CD8-positive, alpha-beta memory T cell (primary cell): ENCODE measurements at regions of chr1 and their contacts with region 1.

Region 1: GRCh38 chr1:212035123-212035834 is at the starts of genes DTL and INTS7:
- DNase-seq: peak; percentile 96 to 99 (median 98)
- H3K4me3 ChIP-seq: peak within 1 kb of the TSS; percentile 96
- H3K4me3 Mint-ChIP-seq: peak within 1 kb of the TSS; percentile 90 to 100 (median 99)
- H3K27ac ChIP-seq: peak within 1 kb of the TSS; percentile 70
- H3K27ac Mint-ChIP-seq: peak within 1 kb of the TSS; percentile 84 to 99 (median 95)
- H3K4me1 ChIP-seq: peaks cover 26% of the 10 kb centered on the region
- H3K4me1 Mint-ChIP-seq: peaks cover 40 to 76% (median 70%) of the 10 kb centered on the region in 3 donors
- H3K27me3 ChIP-seq: no peaks in the 10 kb centered on the region
- H3K27me3 Mint-ChIP-seq: peaks cover 0 to 5% of the 10 kb centered on the region in 2 donors
- total RNA-seq, gene DTL: 85.0 to 86.9 TPM
- total RNA-seq, gene INTS7: 35.2 to 36.0 TPM

Region 2: GRCh38 chr1:211680752-211681327 is 354.4 kb before region 1 on chr1:
- CTCF ChIA-PET with region 1: interaction called, 39 read pairs
- POLR2A ChIA-PET with region 1: interaction called, 5 read pairs
- DNase-seq: peak; percentile 64 to 86 (median 77)
- H3K4me3 ChIP-seq: no peak overlapping the region
- H3K4me3 Mint-ChIP-seq: peak overlapping the region in 6 of 7 donors; percentile 15 to 50 (median 37)
- H3K27ac ChIP-seq: no peak overlapping the region
- H3K27ac Mint-ChIP-seq: peak overlapping the region; percentile 90 to 98 (median 94)
- H3K4me1 ChIP-seq: peaks cover 14% of the 10 kb centered on the region
- H3K4me1 Mint-ChIP-seq: peaks cover 24 to 30% (median 25%) of the 10 kb centered on the region in 3 donors
- H3K27me3 ChIP-seq: no peaks in the 10 kb centered on the region
- H3K27me3 Mint-ChIP-seq: no peaks in the 10 kb centered on the region

Region 3: DNA sequence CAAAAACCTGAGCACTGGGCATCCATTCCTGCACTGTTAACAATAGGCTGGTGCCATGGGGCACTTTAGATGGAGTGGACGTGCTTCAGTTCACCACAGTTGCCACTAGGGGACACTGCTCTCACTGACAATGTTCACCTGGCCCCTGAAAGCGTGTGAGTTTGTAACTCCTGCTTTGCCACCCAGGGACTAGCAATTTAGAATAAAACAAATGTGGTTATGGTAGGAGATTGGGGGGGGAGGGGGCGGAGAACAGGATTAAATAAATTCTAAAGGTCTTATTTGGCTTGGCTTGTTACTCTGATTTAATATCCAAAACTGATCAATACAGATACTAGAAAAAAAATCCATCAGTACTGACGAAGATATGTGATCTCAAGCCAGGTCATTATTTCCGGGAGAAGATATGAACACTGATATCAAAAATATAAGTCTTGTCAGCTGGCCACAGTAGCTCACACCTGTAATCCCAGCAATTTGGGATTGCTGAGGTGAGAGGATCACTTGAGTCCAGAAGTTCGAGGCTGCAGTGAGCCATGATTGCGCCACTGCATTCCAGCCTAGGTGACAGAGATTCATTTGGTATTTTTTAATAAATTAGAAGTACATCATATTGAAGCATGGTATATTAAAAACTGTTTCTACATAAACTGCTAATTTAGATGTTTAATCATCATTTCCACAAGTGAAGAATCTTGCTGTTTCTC is 23.1 kb before region 1 on chr1:
- CTCF ChIA-PET with region 1: interaction called, 13 read pairs
- POLR2A ChIA-PET with region 1: interaction called, 4 read pairs
- DNase-seq: peak; percentile 32 to 72 (median 43)
- H3K4me3 ChIP-seq: no peak overlapping the region
- H3K4me3 Mint-ChIP-seq: no peak overlapping the region
- H3K27ac ChIP-seq: no peak overlapping the region
- H3K27ac Mint-ChIP-seq: peak overlapping the region in 1 of 8 donors; percentile 1
- H3K4me1 ChIP-seq: no peaks in the 10 kb centered on the region
- H3K4me1 Mint-ChIP-seq: peaks cover 0 to 3% (median 3%) of the 10 kb centered on the region in 3 donors
- H3K27me3 ChIP-seq: no peaks in the 10 kb centered on the region
- H3K27me3 Mint-ChIP-seq: no peaks in the 10 kb centered on the region

Region 4: DNA sequence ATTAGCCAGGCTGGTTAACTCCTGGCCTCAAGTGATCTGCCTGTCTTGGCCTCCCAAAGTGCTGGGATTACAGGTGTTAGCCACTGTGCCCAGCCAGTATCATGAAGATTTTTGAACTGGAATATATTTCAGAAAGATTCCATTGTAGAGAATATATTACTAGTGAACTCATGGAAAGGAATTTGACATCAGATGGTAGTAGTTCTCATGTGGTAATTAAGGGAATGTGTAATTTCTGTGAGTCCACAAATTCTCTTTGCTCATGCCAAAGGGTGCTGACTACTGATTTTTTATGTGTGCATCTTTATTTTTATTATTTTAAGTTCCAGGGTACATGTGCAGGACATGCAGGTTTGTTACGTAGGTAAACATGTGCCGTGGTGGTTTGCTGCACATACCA is 10.7 kb after region 1 on chr1:
- CTCF ChIA-PET with region 1: interaction called, 12 read pairs
- POLR2A ChIA-PET with region 1: no interaction called
- DNase-seq: no peak
- H3K4me3 ChIP-seq: no peak overlapping the region
- H3K4me3 Mint-ChIP-seq: no peak overlapping the region
- H3K27ac ChIP-seq: no peak overlapping the region
- H3K27ac Mint-ChIP-seq: peak overlapping the region in 1 of 8 donors; percentile 30
- H3K4me1 ChIP-seq: no peaks in the 10 kb centered on the region
- H3K4me1 Mint-ChIP-seq: peaks cover 1 to 25% (median 6%) of the 10 kb centered on the region in 3 donors
- H3K27me3 ChIP-seq: no peaks in the 10 kb centered on the region
- H3K27me3 Mint-ChIP-seq: peaks cover 0 to under 1% of the 10 kb centered on the region in 2 donors

Region 5: GRCh38 chr1:212269306-212269705 is 234.0 kb after region 1 on chr1:
- CTCF ChIA-PET with region 1: no interaction called
- POLR2A ChIA-PET with region 1: no interaction called
- DNase-seq: no peak
- H3K4me3 ChIP-seq: no peak overlapping the region
- H3K4me3 Mint-ChIP-seq: no peak overlapping the region
- H3K27ac ChIP-seq: no peak overlapping the region
- H3K27ac Mint-ChIP-seq: no peak overlapping the region
- H3K4me1 ChIP-seq: no peaks in the 10 kb centered on the region
- H3K4me1 Mint-ChIP-seq: no peaks in the 10 kb centered on the region
- H3K27me3 ChIP-seq: no peaks in the 10 kb centered on the region
- H3K27me3 Mint-ChIP-seq: peaks cover 5 to 7% of the 10 kb centered on the region in 2 donors